IMR-90 (cell line): ENCODE measurements at regions of chr14 and their contacts with region 1.

Region 1: DNA sequence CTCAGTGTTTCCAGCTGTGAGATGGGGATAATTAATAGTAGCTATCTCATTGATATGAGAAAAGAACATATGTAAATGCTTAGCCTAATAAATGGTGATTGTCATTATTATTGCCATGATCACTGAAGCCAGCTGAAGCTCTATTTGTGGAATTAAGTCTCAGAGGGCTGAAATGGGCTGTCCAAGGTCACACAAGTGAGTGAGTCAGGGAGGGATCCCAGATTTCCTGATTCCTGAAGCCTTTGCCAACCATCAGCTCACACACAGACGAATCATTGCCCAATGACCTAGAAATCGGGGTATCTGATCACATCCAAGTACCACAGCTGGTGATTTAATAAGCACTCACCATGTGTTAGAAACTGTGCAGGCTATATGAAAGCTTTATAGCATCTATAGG is 21.6 kb upstream of the TMEM229B start:
- DNase-seq: peak; percentile 30
- ATAC-seq: no peak
- H3K4me3 ChIP-seq: no peak overlapping the region
- H3K27ac ChIP-seq: no peak overlapping the region
- H3K4me1 ChIP-seq: no peaks in the 10 kb centered on the region
- H3K27me3 ChIP-seq: peaks cover 44% of the 10 kb centered on the region
- CTCF ChIP-seq: no peak
- POLR2A ChIP-seq: no peak
- RAD21 ChIP-seq: no peak

Region 2: GRCh38 chr14:67457782-67458181 is 52.3 kb before region 1 on chr14:
- CTCF ChIA-PET with region 1: no interaction called
- POLR2A ChIA-PET with region 1: no interaction called
- dilution Hi-C with region 1: no loop called
- in situ Hi-C with region 1: no loop called
- intact Hi-C with region 1: no loop called
- DNase-seq: no peak
- ATAC-seq: 0 out of 2 replicates have a peak, but pooled peaks have one; percentile 21
- H3K4me3 ChIP-seq: no peak overlapping the region
- H3K27ac ChIP-seq: no peak overlapping the region
- H3K4me1 ChIP-seq: no peaks in the 10 kb centered on the region
- H3K27me3 ChIP-seq: peaks cover 34% of the 10 kb centered on the region
- CTCF ChIP-seq: no peak
- POLR2A ChIP-seq: no peak
- RAD21 ChIP-seq: no peak

Region 3: DNA sequence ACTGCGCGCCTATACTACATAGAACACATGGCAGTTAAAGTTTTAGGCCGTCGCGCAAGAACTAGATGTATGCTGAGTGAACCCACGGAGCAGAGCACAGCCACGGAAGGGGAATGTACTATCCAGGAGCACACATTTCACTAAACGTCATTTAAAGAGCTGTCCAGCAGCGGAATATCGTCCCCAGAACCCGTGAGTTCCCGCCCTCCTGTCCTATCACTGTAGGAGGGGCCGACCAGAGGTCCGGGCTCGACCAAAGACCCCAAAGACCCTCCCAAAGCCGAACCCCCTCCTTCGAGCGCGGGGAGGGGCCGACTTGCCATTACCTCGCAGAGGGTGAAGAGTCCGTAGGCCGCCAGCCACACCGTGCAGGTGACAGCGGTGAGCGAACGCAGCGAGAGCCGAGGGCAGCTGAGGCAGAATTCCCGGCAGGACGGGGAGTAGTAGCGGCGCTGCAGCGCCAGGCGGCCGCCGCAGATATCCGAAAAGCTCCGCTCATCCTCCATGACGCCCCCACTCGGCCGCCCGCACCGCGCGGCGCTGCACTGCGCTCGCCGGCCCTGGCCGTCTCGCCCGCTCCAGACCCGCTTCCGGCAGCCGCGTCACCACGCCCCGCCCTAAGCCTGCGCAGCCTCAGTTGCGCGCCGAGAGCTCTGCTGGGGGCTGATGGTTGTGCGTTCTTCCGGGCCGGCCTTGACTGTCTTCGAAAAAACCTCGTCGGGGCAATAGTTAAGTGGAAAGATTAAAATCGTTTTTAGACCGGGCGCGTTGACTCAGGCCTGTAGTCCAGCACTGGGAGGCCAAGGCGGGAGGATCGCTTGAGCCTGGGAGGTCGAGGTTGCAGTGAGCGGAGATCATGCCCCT is 89.8 kb after region 1 on chr14 and contains the start of gene PIGH:
- CTCF ChIA-PET with region 1: interaction called, 6 read pairs
- POLR2A ChIA-PET with region 1: interaction called, 14 read pairs
- dilution Hi-C with region 1: no loop called
- in situ Hi-C with region 1: no loop called
- intact Hi-C with region 1: no loop called
- DNase-seq: peak; percentile 80
- ATAC-seq: peak; percentile 99
- H3K4me3 ChIP-seq: peak within 1 kb of the TSS; percentile 67
- H3K27ac ChIP-seq: peak within 1 kb of the TSS; percentile 85
- H3K4me1 ChIP-seq: no peaks in the 10 kb centered on the region
- H3K27me3 ChIP-seq: no peaks in the 10 kb centered on the region
- CTCF ChIP-seq: peak; percentile 68
- POLR2A ChIP-seq: no peak
- RAD21 ChIP-seq: peak; percentile 25; the same call in 1 of the 2 replicates
- total RNA-seq, gene PIGH: 6.7 and 7.9 TPM in 2 replicates